Mammary epithelial cell (primary cell): ENCODE measurements at regions of chr19 and their contacts with region 1.

Region 1: GRCh38 chr19:46186101-46187100 is 38.4 kb downstream of the IGFL2 start:
- DNase-seq: no peak
- H3K4me3 ChIP-seq: no peak overlapping the region
- H3K27ac ChIP-seq: peak overlapping the region; percentile 95
- H3K4me1 ChIP-seq: peaks cover 18% of the 10 kb centered on the region
- H3K27me3 ChIP-seq: no peaks in the 10 kb centered on the region
- CTCF ChIP-seq: no peak

Region 2: DNA sequence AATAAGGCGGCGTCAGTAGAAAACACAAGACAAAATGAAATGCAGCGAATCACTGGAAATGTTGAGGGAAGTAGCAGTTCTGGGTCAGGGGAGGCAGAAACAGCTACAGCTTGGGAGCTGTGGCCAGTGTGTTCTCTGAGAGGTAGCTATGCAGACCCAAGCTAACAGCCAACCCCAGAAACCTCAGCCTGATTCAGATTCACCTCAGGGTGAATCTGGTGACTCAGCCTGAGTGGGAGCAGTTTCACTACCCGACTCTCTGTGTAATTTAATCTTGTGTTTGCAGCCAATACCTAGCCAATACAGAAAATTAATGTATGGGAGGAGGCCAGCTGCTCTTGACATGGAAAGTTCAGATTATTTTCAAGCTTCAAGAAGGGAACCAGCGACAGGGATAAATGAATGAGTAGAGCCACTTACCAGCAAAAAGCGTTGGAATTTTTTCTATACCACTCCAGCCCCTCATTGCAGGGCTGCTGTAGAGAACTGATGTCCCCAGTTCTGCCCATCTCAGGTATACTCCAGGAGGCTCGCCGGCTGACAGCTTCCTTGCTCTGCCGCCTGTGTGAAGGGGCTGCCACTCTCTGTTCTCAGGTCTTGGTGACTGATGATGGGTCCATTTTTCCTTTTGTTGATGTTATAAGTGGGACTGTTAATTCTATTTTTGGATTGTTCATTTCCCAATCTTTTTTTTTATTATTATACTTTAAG is 70.8 kb before region 1 on chr19:
- CTCF ChIA-PET with region 1: no interaction called
- dilution Hi-C with region 1: no loop called
- in situ Hi-C with region 1: no loop called
- intact Hi-C with region 1: loop called (anchors 5 kb)
- DNase-seq: peak; percentile 97
- H3K4me3 ChIP-seq: peak overlapping the region in 2 of 3 experiments; percentile 4 to 15
- H3K27ac ChIP-seq: peak overlapping the region; percentile 97
- H3K4me1 ChIP-seq: peaks cover 45% of the 10 kb centered on the region
- H3K27me3 ChIP-seq: no peaks in the 10 kb centered on the region
- CTCF ChIP-seq: no peak